Mammary epithelial cell (primary cell): ENCODE measurements at regions of chr9 and their contacts with region 1.

Region 1: GRCh38 chr9:126490871-126491567 is 122.7 kb upstream of the LMX1B start:
- DNase-seq: peak; percentile 45
- H3K4me3 ChIP-seq: no peak overlapping the region
- H3K27ac ChIP-seq: no peak overlapping the region
- H3K4me1 ChIP-seq: peaks cover 4% of the 10 kb centered on the region
- H3K27me3 ChIP-seq: no peaks in the 10 kb centered on the region
- CTCF ChIP-seq: peak; percentile 91 to 95

Region 2: DNA sequence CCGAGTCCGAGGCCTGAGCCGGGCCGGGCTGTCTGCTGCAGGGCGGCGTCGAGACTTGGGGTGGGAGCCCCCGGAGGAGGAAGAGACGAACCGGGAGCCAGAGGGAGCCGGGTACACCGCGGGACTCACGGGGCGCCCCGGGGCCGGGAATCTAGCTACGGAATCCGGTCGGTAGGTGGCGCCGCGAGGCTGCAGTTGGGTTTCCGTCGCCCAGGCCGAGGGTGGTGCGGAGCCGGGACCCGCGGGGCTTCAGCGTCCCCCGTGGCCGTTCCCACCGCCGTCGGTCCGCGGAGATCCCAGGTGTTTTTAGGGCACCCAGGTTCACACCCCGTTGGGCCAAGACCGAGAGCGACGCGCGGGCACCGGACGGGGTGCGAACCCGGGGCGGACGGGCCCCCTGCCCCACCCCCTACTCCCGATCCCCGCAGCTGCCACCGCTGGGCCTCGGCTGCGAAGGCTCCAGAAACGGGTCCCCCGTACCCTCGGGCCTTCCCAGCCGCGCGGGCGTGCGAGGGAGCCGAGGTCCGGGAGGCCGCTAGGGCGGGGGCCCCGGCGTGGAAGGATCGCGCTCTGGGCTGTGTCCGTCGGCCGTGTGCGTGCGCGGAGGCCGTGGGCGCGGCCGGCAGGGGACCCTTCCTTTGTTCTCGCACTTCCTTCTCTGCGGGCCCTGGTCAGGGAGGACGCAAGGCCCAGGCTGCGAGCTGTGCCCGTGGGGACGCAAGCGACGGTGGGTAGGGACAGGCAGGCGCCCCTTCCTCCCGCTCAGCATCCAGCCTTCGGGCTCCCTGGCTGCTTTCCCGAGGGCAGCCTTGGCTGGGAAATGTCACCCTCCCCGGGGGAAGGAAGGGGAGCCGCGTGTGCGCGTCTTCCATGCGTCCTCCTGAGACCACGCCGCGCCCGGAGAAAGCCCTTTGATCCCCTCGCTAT is 1082.8 kb before region 1 on chr9:
- CTCF ChIA-PET with region 1: interaction called, 3 read pairs
- dilution Hi-C with region 1: no loop called
- in situ Hi-C with region 1: loop called (anchors 25 kb)
- intact Hi-C with region 1: loop called (anchors 1 kb)
- DNase-seq: peak; percentile 42
- H3K4me3 ChIP-seq: peak overlapping the region; percentile 46 to 71 (median 62)
- H3K27ac ChIP-seq: no peak overlapping the region
- H3K4me1 ChIP-seq: peaks cover 9% of the 10 kb centered on the region
- H3K27me3 ChIP-seq: no peaks in the 10 kb centered on the region
- CTCF ChIP-seq: peak; percentile 60 to 88

Region 3: DNA sequence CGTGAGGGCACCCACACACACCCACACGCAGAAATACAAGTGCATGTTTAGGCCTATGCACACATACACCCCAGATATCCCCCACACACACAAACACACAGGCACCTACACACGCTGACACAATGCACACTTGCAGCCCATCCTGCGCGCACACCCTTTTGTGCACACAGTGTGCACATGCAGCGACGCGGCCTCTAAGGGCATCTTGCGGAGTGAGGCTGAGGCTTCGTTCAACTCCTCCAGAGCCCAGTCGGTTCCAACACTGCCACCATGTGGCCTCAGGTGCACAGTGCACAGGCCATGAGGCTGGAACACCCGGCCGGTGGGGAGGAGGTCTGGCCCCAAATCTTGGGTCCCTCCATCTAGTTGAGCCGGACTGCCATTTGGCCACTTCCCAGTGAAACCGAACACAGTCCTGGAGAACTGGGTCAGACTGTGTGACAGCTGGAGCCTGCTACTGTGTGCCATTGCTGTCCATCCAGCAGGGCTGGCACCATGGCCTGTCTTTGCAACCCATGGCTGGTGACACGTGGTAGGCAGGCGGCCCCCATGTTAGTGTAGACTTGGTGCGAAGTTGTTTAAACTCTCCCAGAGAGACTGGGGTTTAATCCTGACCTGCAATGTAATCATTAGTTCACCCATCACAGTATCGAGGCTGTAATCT is 262.1 kb before region 1 on chr9:
- CTCF ChIA-PET with region 1: no interaction called
- dilution Hi-C with region 1: no loop called
- in situ Hi-C with region 1: no loop called
- intact Hi-C with region 1: loop called (anchors 2 kb)
- DNase-seq: peak; percentile 45
- H3K4me3 ChIP-seq: no peak overlapping the region
- H3K27ac ChIP-seq: no peak overlapping the region
- H3K4me1 ChIP-seq: no peaks in the 10 kb centered on the region
- H3K27me3 ChIP-seq: no peaks in the 10 kb centered on the region
- CTCF ChIP-seq: peak; percentile 97 to 98

Region 4: DNA sequence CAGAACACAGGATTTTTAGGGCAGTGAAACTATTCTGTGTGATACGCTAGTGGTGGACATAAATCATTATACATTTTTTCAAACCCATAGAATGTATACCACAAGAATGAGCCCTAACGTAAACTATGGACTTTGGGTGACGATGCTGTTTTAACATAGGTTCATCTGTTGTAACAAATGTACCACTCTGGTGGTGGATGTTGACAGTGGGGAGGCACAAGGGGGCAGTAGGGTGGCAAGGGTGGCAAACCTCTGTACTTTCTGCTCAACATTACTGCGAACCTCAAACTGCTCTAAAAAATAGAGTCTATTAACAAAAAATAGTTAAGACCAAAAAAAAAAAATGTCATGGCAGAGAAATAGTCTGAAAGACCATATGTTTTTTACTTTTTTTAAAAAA is 173.5 kb before region 1 on chr9:
- CTCF ChIA-PET with region 1: no interaction called
- dilution Hi-C with region 1: no loop called
- in situ Hi-C with region 1: no loop called
- intact Hi-C with region 1: loop called (anchors 1 kb)
- DNase-seq: no peak
- H3K4me3 ChIP-seq: no peak overlapping the region
- H3K27ac ChIP-seq: no peak overlapping the region
- H3K4me1 ChIP-seq: no peaks in the 10 kb centered on the region
- H3K27me3 ChIP-seq: no peaks in the 10 kb centered on the region
- CTCF ChIP-seq: peak; percentile 17 to 46

Region 5: GRCh38 chr9:126563556-126563955 is 72.5 kb after region 1 on chr9:
- CTCF ChIA-PET with region 1: interaction called, 25 read pairs
- dilution Hi-C with region 1: no loop called
- in situ Hi-C with region 1: no loop called
- intact Hi-C with region 1: no loop called
- DNase-seq: no peak
- H3K4me3 ChIP-seq: no peak overlapping the region
- H3K27ac ChIP-seq: no peak overlapping the region
- H3K4me1 ChIP-seq: no peaks in the 10 kb centered on the region
- H3K27me3 ChIP-seq: no peaks in the 10 kb centered on the region
- CTCF ChIP-seq: no peak

Region 6: GRCh38 chr9:126578029-126578428 is 87.0 kb after region 1 on chr9:
- CTCF ChIA-PET with region 1: no interaction called
- dilution Hi-C with region 1: no loop called
- in situ Hi-C with region 1: no loop called
- intact Hi-C with region 1: no loop called
- DNase-seq: no peak
- H3K4me3 ChIP-seq: no peak overlapping the region
- H3K27ac ChIP-seq: no peak overlapping the region
- H3K4me1 ChIP-seq: no peaks in the 10 kb centered on the region
- H3K27me3 ChIP-seq: peaks cover 5% of the 10 kb centered on the region
- CTCF ChIP-seq: no peak